Activated naive CD4-positive, alpha-beta T cell treated with anti-CD3 and anti-CD28 coated beads for 36 hours (primary cell): ENCODE measurements at regions of chr10 and their contacts with region 1.

Region 1: DNA sequence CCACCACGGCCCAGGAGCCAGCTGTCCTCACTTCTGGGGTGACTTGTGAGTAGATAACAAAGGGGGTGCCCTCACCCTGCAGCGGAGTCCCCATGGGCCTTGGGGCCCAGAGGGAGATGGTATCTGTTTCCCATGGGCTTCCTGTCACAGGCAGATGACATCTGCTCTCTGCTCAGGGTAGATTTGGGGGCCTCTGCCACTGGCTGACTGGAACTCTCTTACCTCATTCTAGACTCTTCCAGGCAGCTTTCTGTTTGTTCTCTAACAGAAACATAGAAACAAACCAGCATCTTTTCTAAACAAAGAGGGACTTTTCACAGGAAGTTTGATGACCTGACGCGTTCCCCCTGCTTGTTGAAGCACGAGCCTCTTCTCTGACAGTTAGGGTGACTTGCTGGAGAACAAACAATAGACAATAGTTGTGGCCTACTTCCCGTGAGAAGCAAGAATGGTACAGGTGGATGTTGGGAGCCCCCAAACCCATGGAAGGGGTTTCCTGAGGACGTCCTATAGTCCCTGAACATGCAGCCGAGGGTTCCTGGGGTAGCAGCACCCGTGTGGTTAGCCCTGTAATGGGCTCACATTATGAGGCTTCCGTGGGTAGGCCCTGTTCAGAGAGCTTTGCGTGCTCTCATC is 61.6 kb downstream of the GRK5 start:
- DNase-seq: peak; percentile 89
- H3K4me3 Mint-ChIP-seq: peak overlapping the region; percentile 39
- H3K27ac Mint-ChIP-seq: peak overlapping the region; percentile 93
- H3K4me1 Mint-ChIP-seq: peaks cover 52% of the 10 kb centered on the region
- H3K27me3 Mint-ChIP-seq: no peaks in the 10 kb centered on the region

Region 2: GRCh38 chr10:118798231-118798662 is 470.7 kb before region 1 on chr10:
- CTCF ChIA-PET with region 1: no interaction called
- intact Hi-C with region 1: no loop called
- DNase-seq: no peak
- H3K4me3 Mint-ChIP-seq: no peak overlapping the region
- H3K27ac Mint-ChIP-seq: no peak overlapping the region
- H3K4me1 Mint-ChIP-seq: peaks cover 3% of the 10 kb centered on the region
- H3K27me3 Mint-ChIP-seq: peaks cover 8% of the 10 kb centered on the region

Region 3: GRCh38 chr10:119233821-119234220 is 35.2 kb before region 1 on chr10:
- CTCF ChIA-PET with region 1: no interaction called
- intact Hi-C with region 1: loop called (anchors 1 kb)
- DNase-seq: no peak
- H3K4me3 Mint-ChIP-seq: no peak overlapping the region
- H3K27ac Mint-ChIP-seq: peak overlapping the region; percentile 68
- H3K4me1 Mint-ChIP-seq: peaks cover 72% of the 10 kb centered on the region
- H3K27me3 Mint-ChIP-seq: no peaks in the 10 kb centered on the region

Region 4: GRCh38 chr10:119253433-119254174 is 15.4 kb before region 1 on chr10:
- CTCF ChIA-PET with region 1: no interaction called
- intact Hi-C with region 1: loop called (anchors 1 kb)
- DNase-seq: peak; percentile 82
- H3K4me3 Mint-ChIP-seq: no peak overlapping the region
- H3K27ac Mint-ChIP-seq: peak overlapping the region; percentile 88
- H3K4me1 Mint-ChIP-seq: peaks cover 55% of the 10 kb centered on the region
- H3K27me3 Mint-ChIP-seq: no peaks in the 10 kb centered on the region

Region 5: GRCh38 chr10:119285489-119286267 is 16.7 kb after region 1 on chr10:
- CTCF ChIA-PET with region 1: interaction called, 4 read pairs
- intact Hi-C with region 1: loop called (anchors 1 kb)
- DNase-seq: no peak
- H3K4me3 Mint-ChIP-seq: peak overlapping the region; percentile 55
- H3K27ac Mint-ChIP-seq: peak overlapping the region; percentile 78
- H3K4me1 Mint-ChIP-seq: peaks cover 81% of the 10 kb centered on the region
- H3K27me3 Mint-ChIP-seq: no peaks in the 10 kb centered on the region

Region 6: DNA sequence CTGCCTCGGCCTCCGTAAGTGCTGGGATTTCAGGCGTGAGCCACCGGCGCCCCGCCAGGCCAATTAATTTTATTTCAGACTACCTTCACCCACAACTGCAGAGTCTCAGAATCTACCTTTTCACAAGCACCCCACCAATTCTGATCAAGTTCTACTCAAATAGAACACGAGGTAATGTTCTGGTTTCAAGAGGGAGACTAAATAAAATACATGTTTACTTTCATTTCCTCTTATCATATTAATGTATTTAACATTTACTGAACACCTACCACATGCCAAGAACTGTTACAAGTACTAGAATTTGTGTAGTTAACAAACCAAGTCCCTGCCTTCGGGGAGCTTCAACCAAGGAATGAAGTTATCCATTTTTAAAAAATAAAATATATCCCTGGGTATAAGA is 299.0 kb after region 1 on chr10:
- CTCF ChIA-PET with region 1: no interaction called
- intact Hi-C with region 1: no loop called
- DNase-seq: no peak
- H3K4me3 Mint-ChIP-seq: no peak overlapping the region
- H3K27ac Mint-ChIP-seq: no peak overlapping the region
- H3K4me1 Mint-ChIP-seq: no peaks in the 10 kb centered on the region
- H3K27me3 Mint-ChIP-seq: no peaks in the 10 kb centered on the region

Region 7: GRCh38 chr10:119596537-119597404 is 327.8 kb after region 1 on chr10 and contains the start of gene TIAL1:
- CTCF ChIA-PET with region 1: no interaction called
- intact Hi-C with region 1: no loop called
- DNase-seq: peak; percentile 98
- H3K4me3 Mint-ChIP-seq: peak within 1 kb of the TSS; percentile 93
- H3K27ac Mint-ChIP-seq: peak within 1 kb of the TSS; percentile 98
- H3K4me1 Mint-ChIP-seq: peaks cover 47% of the 10 kb centered on the region
- H3K27me3 Mint-ChIP-seq: no peaks in the 10 kb centered on the region
- total RNA-seq, gene TIAL1: 184 to 192 TPM